Transverse colon (tissue), 4 donors: ENCODE measurements at regions of chr13 and their contacts with region 1.

Region 1: DNA sequence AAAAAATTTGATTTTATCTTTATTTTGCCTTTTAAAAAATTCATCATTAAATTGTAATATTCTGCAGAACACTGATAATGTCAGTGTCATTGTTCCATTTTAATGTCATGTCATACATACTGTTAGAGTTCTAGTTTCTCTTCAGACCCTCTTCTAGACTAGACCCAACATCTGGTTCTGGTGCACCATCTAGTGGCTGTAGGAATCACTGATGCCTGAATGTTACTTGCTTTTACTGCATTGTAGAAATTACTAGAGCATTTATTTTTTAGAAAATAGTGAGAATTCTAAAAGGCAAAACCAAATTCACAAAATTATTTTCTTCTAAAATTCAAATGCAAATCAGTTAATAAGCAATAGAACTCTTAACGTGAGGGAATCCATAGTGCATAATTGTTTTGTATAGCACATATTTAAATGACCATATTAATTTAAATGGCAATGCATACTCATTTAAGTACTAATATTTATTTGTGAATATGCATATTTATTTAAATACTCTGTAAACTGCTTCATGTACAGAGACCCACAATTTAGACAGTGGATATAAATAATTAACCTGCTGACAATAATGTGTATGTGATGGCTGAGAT is 425.7 kb downstream of the KLF12 start:
- DNase-seq: peak; percentile 59
- H3K4me3 ChIP-seq: no peak overlapping the region
- H3K27ac ChIP-seq: no peak overlapping the region
- H3K4me1 ChIP-seq: peaks cover 0 to 11% (median 2%) of the 10 kb centered on the region in 4 donors
- H3K27me3 ChIP-seq: no peaks in the 10 kb centered on the region
- CTCF ChIP-seq: peak; percentile 66 to 89 (median 76)
- EP300 ChIP-seq: no peak
- POLR2A ChIP-seq: no peak

Region 2: GRCh38 chr13:72808917-72809500 is 899.5 kb before region 1 on chr13:
- in situ Hi-C with region 1: loop called in 2 of 4 experiments (anchors 10 to 25 kb)
- intact Hi-C with region 1: no loop called
- DNase-seq: no peak
- H3K4me3 ChIP-seq: no peak overlapping the region
- H3K27ac ChIP-seq: peak overlapping the region in 2 of 4 donors; percentile 0 to 35
- H3K4me1 ChIP-seq: peaks cover 0 to 15% (median 0%) of the 10 kb centered on the region in 4 donors
- H3K27me3 ChIP-seq: no peaks in the 10 kb centered on the region
- CTCF ChIP-seq: peak; percentile 58 to 71 (median 64)
- EP300 ChIP-seq: no peak
- POLR2A ChIP-seq: no peak

Region 3: DNA sequence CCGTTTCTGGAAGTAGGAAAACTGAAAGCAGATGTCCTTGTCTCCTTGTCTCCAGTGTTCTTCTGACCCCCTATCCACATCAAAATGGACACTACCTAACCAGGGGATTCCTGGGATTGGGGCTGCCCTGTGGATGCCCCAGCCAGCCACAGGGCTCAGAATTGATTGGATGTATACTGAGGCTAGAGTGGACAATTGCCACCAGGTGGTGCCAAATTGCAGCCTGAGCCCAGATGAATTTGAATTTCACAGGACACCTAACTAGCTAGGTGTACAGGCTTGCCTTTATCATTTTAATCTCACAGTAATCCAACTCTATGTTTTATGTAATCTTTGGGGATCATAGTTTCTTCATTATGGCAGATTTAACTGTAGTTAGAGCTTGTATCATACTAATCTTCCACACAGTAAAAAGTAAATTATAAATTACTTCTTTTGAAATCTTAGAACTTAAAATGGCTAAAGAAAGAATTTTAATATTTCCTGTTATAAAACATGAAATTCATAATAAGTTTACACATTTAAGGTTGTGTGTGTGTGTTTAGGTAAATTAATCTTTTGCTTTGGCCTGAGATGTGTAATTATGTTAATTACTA is 868.6 kb before region 1 on chr13:
- in situ Hi-C with region 1: loop called in 2 of 4 experiments (anchors 10 to 25 kb)
- intact Hi-C with region 1: no loop called
- DNase-seq: peak; percentile 79
- H3K4me3 ChIP-seq: no peak overlapping the region
- H3K27ac ChIP-seq: peak overlapping the region in 2 of 4 donors; percentile 7 to 47
- H3K4me1 ChIP-seq: peaks cover 0 to 14% (median 0%) of the 10 kb centered on the region in 4 donors
- H3K27me3 ChIP-seq: no peaks in the 10 kb centered on the region
- CTCF ChIP-seq: peak; percentile 49 to 81 (median 70)
- EP300 ChIP-seq: no peak
- POLR2A ChIP-seq: no peak

Region 4: DNA sequence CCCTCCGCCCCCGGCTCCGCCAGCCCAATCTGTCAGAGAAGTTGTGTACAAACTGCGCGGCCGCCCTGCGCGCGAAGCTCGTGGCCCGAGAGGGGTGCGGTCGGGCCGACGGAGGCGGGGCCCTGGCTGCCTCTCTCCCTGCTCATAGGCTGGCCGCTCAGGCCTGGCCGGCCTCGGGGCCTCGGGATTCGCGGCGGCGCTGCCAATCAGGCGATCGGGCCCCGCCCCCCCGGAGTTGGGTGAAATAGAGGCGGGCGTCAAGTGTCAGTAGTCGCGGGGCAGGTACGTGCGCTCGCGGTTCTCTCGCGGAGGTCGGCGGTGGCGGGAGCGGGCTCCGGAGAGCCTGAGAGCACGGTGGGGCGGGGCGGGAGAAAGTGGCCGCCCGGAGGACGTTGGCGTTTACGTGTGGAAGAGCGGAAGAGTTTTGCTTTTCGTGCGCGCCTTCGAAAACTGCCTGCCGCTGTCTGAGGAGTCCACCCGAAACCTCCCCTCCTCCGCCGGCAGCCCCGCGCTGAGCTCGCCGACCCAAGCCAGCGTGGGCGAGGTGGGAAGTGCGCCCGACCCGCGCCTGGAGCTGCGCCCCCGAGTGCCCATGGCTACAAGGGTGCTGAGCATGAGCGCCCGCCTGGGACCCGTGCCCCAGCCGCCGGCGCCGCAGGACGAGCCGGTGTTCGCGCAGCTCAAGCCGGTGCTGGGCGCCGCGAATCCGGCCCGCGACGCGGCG is 649.6 kb before region 1 on chr13 and contains the start of gene KLF5:
- in situ Hi-C with region 1: loop called in 3 of 4 experiments (anchors 10 to 25 kb)
- intact Hi-C with region 1: no loop called
- DNase-seq: peak; percentile 98
- H3K4me3 ChIP-seq: peak within 1 kb of the TSS; percentile 78 to 97 (median 90)
- H3K27ac ChIP-seq: peak within 1 kb of the TSS; percentile 83 to 91 (median 90)
- H3K4me1 ChIP-seq: peaks cover 0 to 15% (median 4%) of the 10 kb centered on the region in 4 donors
- H3K27me3 ChIP-seq: peaks cover 3% of the 10 kb centered on the region
- CTCF ChIP-seq: no peak
- EP300 ChIP-seq: no peak
- POLR2A ChIP-seq: peak; percentile 100
- total RNA-seq, gene KLF5: 192 to 334 (median 270) TPM